ENCODE measurements at regions of chr2 and their contacts with region 1.

Region 1: DNA sequence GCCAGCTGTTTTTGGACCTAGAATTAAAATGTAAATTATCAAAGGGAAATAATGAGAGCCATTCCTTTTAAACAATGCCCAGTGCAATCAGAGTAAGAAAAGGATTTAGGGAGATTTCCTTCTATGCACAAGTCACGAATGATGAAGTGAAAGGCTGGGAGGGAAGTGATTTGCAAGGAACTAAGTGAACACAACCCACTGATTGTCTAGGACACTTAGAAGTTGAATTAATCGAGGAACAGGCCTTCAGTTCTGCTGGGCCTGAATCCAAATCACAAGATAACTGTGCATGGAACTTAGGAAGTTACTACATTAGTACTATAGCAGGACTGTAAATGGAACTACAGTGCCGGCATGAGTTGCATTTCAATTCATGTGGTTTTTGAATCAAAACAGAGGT is 17.7 kb downstream of the MAP2 start:
- DNase-seq: peak in 1 of 2 donors; percentile 27
- ATAC-seq: peak in 6 of 8 donors; percentile 67 to 84 (median 74)
- H3K4me3 ChIP-seq: no peak overlapping the region
- H3K27ac ChIP-seq: peak overlapping the region in 6 of 10 donors; percentile 1 to 65 (median 30)
- H3K4me1 ChIP-seq: peaks cover 0 to 48% (median 26%) of the 10 kb centered on the region in 9 donors
- H3K27me3 ChIP-seq: no peaks in the 10 kb centered on the region
- CTCF ChIP-seq: no peak

Region 2: GRCh38 chr2:209495855-209496585 is 54.5 kb after region 1 on chr2:
- intact Hi-C with region 1: loop called in 2 of 10 experiments (anchors 5 to 10 kb)
- DNase-seq: peak in 1 of 2 donors; percentile 67
- ATAC-seq: peak; percentile 91 to 98 (median 97)
- H3K4me3 ChIP-seq: peak overlapping the region in 5 of 10 donors; percentile 3 to 20 (median 12)
- H3K27ac ChIP-seq: peak overlapping the region; percentile 70 to 93 (median 82)
- H3K4me1 ChIP-seq: peaks cover 3 to 36% (median 15%) of the 10 kb centered on the region in 9 donors
- H3K27me3 ChIP-seq: no peaks in the 10 kb centered on the region
- CTCF ChIP-seq: no peak

Region 3: GRCh38 chr2:209536363-209536762 is 94.8 kb after region 1 on chr2:
- intact Hi-C with region 1: loop called in 1 of 10 experiments (anchors 5 kb)
- DNase-seq: no peak
- ATAC-seq: peak in 1 of 8 donors; percentile 56
- H3K4me3 ChIP-seq: no peak overlapping the region
- H3K27ac ChIP-seq: no peak overlapping the region
- H3K4me1 ChIP-seq: peaks cover 0 to 7% (median 0%) of the 10 kb centered on the region in 9 donors
- H3K27me3 ChIP-seq: no peaks in the 10 kb centered on the region
- CTCF ChIP-seq: no peak

Region 4: GRCh38 chr2:209762563-209762962 is 321.0 kb after region 1 on chr2:
- intact Hi-C with region 1: no loop called
- DNase-seq: no peak
- ATAC-seq: no peak
- H3K4me3 ChIP-seq: no peak overlapping the region
- H3K27ac ChIP-seq: no peak overlapping the region
- H3K4me1 ChIP-seq: no peaks in the 10 kb centered on the region
- H3K27me3 ChIP-seq: no peaks in the 10 kb centered on the region
- CTCF ChIP-seq: no peak

Measured in heart right ventricle (tissue), 16 donors.